Activated CD8-positive, alpha-beta T cell treated with anti-CD3 and anti-CD28 coated beads, Interleukin-2, amount 10 ng/mL, durations not matched to agents 7 days and 5 days (primary cell): ENCODE measurements at regions of chr10 and their contacts with region 1.

Region 1: GRCh38 chr10:89391917-89392756 is at the start of gene IFIT1:
- DNase-seq: peak; percentile 76
- ATAC-seq: peak; percentile 92
- H3K4me3 Mint-ChIP-seq: peak within 1 kb of the TSS; percentile 91
- H3K27ac Mint-ChIP-seq: peak within 1 kb of the TSS; percentile 94
- H3K4me1 Mint-ChIP-seq: peaks cover 33% of the 10 kb centered on the region
- H3K27me3 Mint-ChIP-seq: no peaks in the 10 kb centered on the region
- total RNA-seq, gene IFIT1: 29.8 to 31.8 TPM

Region 2: GRCh38 chr10:89301721-89302445 is 90.3 kb before region 1 on chr10 and contains the start of gene IFIT2:
- CTCF ChIA-PET with region 1: interaction called, 13 read pairs
- POLR2A ChIA-PET with region 1: interaction called, 23 read pairs
- DNase-seq: peak; percentile 44
- ATAC-seq: peak; percentile 82
- H3K4me3 Mint-ChIP-seq: peak within 1 kb of the TSS; percentile 92
- H3K27ac Mint-ChIP-seq: peak within 1 kb of the TSS; percentile 94
- H3K4me1 Mint-ChIP-seq: peaks cover 42% of the 10 kb centered on the region
- H3K27me3 Mint-ChIP-seq: no peaks in the 10 kb centered on the region
- total RNA-seq, gene IFIT2: 7.3 TPM

Region 3: DNA sequence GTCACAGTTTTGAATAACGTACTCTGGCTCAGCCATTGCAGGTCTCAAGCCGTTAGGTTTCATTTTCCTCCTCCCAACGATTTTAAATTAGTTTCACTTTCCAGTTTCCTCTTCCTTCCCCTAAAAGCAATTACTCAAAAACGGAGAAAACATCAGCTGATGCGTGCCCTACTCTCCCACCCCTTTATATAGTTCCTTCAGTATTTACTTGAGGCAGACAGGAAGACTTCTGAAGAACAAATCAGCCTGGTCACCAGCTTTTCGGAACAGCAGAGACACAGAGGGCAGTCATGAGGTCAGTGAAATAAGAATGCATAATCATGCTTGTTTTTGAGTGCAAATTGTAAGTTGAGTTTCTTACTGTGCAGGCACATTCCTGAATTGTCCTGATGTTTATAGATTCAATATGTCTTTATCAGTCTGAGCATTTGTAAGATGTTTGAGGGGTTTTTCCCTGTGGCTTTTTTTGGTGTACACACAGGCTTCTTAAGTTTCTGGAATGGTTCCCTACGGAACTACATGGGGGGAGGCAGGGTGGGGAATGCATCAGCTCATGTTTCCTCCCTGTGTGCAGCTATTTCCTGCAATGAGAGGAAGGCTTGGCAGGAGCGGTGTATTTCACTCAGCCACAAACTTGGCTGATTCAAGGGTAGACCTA is 64.2 kb before region 1 on chr10 and contains the start of gene IFIT3:
- CTCF ChIA-PET with region 1: interaction called, 8 read pairs
- POLR2A ChIA-PET with region 1: interaction called, 23 read pairs
- DNase-seq: peak; percentile 48
- ATAC-seq: peak; percentile 42
- H3K4me3 Mint-ChIP-seq: peak within 1 kb of the TSS; percentile 93
- H3K27ac Mint-ChIP-seq: peak within 1 kb of the TSS; percentile 96
- H3K4me1 Mint-ChIP-seq: peaks cover 63% of the 10 kb centered on the region
- H3K27me3 Mint-ChIP-seq: no peaks in the 10 kb centered on the region
- total RNA-seq, gene IFIT3: 42.8 to 43.7 TPM

Region 4: DNA sequence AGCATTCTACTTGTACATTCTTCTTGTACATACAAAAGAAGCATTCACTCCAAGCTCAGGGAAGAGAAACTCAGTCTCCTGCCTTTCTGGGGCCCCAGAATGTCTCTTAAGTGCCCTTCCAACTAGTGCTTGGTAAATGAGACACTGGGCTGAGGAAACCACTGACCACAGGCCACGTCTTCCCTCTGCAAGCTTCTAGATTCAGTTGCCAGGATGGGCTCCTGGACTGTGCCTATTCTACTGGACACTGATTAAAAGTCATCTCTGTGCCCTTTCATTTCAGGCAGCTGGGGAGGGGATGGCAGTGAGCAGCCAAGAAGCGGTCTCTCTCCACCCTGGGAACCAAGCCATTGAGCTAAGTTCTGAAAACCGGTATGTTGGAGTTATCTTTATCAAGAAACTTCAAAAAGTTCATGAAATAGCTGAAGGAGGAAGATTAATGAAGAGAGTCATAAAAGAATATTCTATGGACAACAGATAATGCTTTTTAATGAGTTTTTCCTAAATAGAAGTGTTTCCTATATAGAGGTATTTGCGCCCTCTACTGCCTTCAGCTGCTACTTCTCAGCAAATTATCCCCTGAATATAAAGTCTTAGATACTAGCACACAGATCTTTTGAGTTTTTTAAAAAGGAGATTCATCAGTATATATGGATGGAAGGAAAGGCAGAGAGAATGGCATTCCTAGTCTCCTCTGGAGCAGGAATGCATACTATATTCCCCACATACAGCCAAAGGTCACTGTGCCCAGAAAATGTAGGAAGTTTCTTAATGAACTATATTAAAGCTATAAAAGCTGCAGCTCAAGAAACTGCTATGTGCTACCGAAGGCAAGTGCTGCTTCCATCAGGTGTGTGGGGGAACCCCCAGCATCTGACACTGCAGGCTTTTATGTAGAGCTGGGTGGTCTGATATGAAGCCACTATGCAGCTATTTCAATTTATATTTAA is 22.7 kb before region 1 on chr10:
- CTCF ChIA-PET with region 1: interaction called, 26 read pairs
- POLR2A ChIA-PET with region 1: no interaction called
- DNase-seq: peak; percentile 42
- ATAC-seq: no peak
- H3K4me3 Mint-ChIP-seq: no peak overlapping the region
- H3K27ac Mint-ChIP-seq: no peak overlapping the region
- H3K4me1 Mint-ChIP-seq: peaks cover 24% of the 10 kb centered on the region
- H3K27me3 Mint-ChIP-seq: peaks cover 13% of the 10 kb centered on the region

Region 5: GRCh38 chr10:89414146-89414878 is 22.2 kb after region 1 on chr10 and contains the start of gene IFIT5:
- CTCF ChIA-PET with region 1: interaction called, 17 read pairs
- POLR2A ChIA-PET with region 1: interaction called, 78 read pairs
- DNase-seq: peak; percentile 76
- ATAC-seq: peak; percentile 83
- H3K4me3 Mint-ChIP-seq: peak within 1 kb of the TSS; percentile 85
- H3K27ac Mint-ChIP-seq: peak within 1 kb of the TSS; percentile 97
- H3K4me1 Mint-ChIP-seq: peaks cover 53% of the 10 kb centered on the region
- H3K27me3 Mint-ChIP-seq: no peaks in the 10 kb centered on the region
- total RNA-seq, gene IFIT5: 22.5 to 22.7 TPM

Region 6: GRCh38 chr10:89419548-89419947 is 27.4 kb after region 1 on chr10:
- CTCF ChIA-PET with region 1: interaction called, 17 read pairs
- POLR2A ChIA-PET with region 1: interaction called, 78 read pairs
- DNase-seq: no peak
- ATAC-seq: no peak
- H3K4me3 Mint-ChIP-seq: peak overlapping the region; percentile 36
- H3K27ac Mint-ChIP-seq: no peak overlapping the region
- H3K4me1 Mint-ChIP-seq: peaks cover 35% of the 10 kb centered on the region
- H3K27me3 Mint-ChIP-seq: no peaks in the 10 kb centered on the region